Endothelial cell of umbilical vein (primary cell): ENCODE measurements at regions of chr3 and their contacts with region 1.

Region 1: DNA sequence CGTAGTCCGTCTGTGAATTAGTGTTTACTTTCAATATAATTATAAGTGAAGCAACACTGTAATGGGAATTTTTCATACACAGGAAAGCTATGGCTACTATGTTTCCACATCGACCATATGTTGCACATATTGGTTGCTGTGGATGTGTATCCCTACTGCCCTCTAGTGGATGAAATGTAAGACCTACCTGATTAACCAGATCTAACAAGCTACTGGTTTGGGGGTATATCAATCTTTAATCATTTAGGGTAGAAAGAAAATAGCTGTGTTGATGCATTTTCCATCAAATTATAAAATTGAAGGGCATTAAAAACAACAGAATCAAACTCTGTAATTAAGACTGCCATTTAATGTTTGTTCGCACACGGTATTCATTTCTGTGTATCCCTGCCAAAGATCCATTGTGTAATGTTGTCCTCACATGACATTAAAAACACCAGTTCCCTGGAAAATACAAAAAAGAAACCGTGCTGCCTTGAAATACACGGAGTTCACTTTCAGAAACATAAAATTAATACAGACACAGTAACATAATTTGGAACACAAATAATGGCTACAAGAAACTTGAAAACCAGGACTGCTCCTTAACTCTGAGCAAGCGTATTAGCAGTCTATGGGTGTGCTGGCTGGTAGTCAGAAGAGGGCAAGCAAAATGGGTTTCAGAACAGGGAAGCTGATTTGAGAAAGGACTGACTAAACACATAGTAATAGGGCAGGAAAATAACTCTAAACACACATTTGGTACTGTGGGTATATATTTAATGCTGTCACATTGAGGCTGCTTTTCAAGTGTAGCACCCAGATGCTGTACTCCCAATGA is 125.1 kb downstream of the TIGIT start:
- DNase-seq: peak; percentile 78
- H3K4me3 ChIP-seq: no peak overlapping the region
- H3K27ac ChIP-seq: no peak overlapping the region
- H3K4me1 ChIP-seq: no peaks in the 10 kb centered on the region
- H3K27me3 ChIP-seq: no peaks in the 10 kb centered on the region
- CTCF ChIP-seq: peak; percentile 55 to 61
- POLR2A ChIP-seq: no peak

Region 2: GRCh38 chr3:113736548-113737089 is 682.3 kb before region 1 on chr3:
- CTCF ChIA-PET with region 1: interaction called, 7 read pairs
- POLR2A ChIA-PET with region 1: no interaction called
- dilution Hi-C with region 1: no loop called
- intact Hi-C with region 1: loop called (anchors 10 kb)
- DNase-seq: peak; percentile 79
- H3K4me3 ChIP-seq: no peak overlapping the region
- H3K27ac ChIP-seq: no peak overlapping the region
- H3K4me1 ChIP-seq: peaks cover 10% of the 10 kb centered on the region
- H3K27me3 ChIP-seq: no peaks in the 10 kb centered on the region
- CTCF ChIP-seq: peak; percentile 28 to 47
- POLR2A ChIP-seq: no peak

Region 3: GRCh38 chr3:114290911-114291901 is 127.7 kb before region 1 on chr3:
- CTCF ChIA-PET with region 1: interaction called, 17 read pairs
- POLR2A ChIA-PET with region 1: no interaction called
- dilution Hi-C with region 1: no loop called
- intact Hi-C with region 1: loop called (anchors 1 kb)
- DNase-seq: peak; percentile 50
- H3K4me3 ChIP-seq: no peak overlapping the region
- H3K27ac ChIP-seq: no peak overlapping the region
- H3K4me1 ChIP-seq: no peaks in the 10 kb centered on the region
- H3K27me3 ChIP-seq: peaks cover 2% of the 10 kb centered on the region in 2 experiments
- CTCF ChIP-seq: peak; percentile 76 to 80
- POLR2A ChIP-seq: no peak

Region 4: GRCh38 chr3:114393367-114394072 is 25.4 kb before region 1 on chr3:
- CTCF ChIA-PET with region 1: interaction called, 14 read pairs
- POLR2A ChIA-PET with region 1: no interaction called
- dilution Hi-C with region 1: no loop called
- intact Hi-C with region 1: no loop called
- DNase-seq: no peak
- H3K4me3 ChIP-seq: no peak overlapping the region
- H3K27ac ChIP-seq: no peak overlapping the region
- H3K4me1 ChIP-seq: no peaks in the 10 kb centered on the region
- H3K27me3 ChIP-seq: no peaks in the 10 kb centered on the region
- CTCF ChIP-seq: no peak
- POLR2A ChIP-seq: no peak

Region 5: GRCh38 chr3:114435386-114436115 is 16.6 kb after region 1 on chr3:
- CTCF ChIA-PET with region 1: interaction called, 38 read pairs
- POLR2A ChIA-PET with region 1: no interaction called
- dilution Hi-C with region 1: no loop called
- intact Hi-C with region 1: no loop called
- DNase-seq: no peak
- H3K4me3 ChIP-seq: no peak overlapping the region
- H3K27ac ChIP-seq: no peak overlapping the region
- H3K4me1 ChIP-seq: no peaks in the 10 kb centered on the region
- H3K27me3 ChIP-seq: no peaks in the 10 kb centered on the region
- CTCF ChIP-seq: no peak
- POLR2A ChIP-seq: no peak